Right ventricle myocardium superior (tissue), 1 donor: ENCODE measurements at regions of chr13 and their contacts with region 1.

Region 1: GRCh38 chr13:110572453-110573118 is 11.1 kb upstream of the RAB20 start:
- DNase-seq: no peak
- ATAC-seq: no peak

Region 2: DNA sequence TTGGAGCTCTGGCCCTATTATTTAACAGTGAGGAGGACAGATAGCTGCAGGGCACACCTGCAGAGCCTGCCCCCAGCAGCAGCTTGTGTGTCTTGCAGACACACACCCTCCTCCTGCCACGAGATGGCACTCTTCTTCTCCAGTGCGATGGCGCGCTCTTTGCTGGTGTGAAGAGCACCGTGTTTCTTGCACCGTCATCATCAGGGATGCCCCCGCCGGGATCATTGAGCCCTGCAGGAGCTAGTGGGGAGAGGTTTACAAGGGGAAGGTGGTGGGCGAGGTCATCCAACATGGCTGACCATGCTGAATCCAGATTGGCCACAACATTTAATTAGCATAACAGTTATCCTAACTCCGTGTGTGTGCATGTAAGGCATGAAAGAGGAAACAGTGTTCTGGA is 116.6 kb before region 1 on chr13:
- intact Hi-C with region 1: loop called (anchors 5 kb)
- DNase-seq: peak; percentile 80
- ATAC-seq: peak; percentile 94